Naive thymus-derived CD8-positive, alpha-beta T cell (primary cell): ENCODE measurements at regions of chr3 and their contacts with region 1.

Region 1: GRCh38 chr3:169966428-169966950 is at the start of gene SEC62:
- DNase-seq: peak; percentile 92 to 97 (median 96)
- ATAC-seq: peak; percentile 87 to 88
- H3K4me3 Mint-ChIP-seq: peak within 1 kb of the TSS; percentile 90 to 99 (median 96)
- H3K27ac Mint-ChIP-seq: peak within 1 kb of the TSS; percentile 98 to 100 (median 99)
- H3K4me1 Mint-ChIP-seq: peaks cover 32 to 73% (median 60%) of the 10 kb centered on the region in 4 donors
- H3K27me3 Mint-ChIP-seq: peaks cover 0 to 4% (median 0%) of the 10 kb centered on the region in 5 donors
- polyA plus RNA-seq, gene SEC62: 170 to 226 (median 225) TPM

Region 2: DNA sequence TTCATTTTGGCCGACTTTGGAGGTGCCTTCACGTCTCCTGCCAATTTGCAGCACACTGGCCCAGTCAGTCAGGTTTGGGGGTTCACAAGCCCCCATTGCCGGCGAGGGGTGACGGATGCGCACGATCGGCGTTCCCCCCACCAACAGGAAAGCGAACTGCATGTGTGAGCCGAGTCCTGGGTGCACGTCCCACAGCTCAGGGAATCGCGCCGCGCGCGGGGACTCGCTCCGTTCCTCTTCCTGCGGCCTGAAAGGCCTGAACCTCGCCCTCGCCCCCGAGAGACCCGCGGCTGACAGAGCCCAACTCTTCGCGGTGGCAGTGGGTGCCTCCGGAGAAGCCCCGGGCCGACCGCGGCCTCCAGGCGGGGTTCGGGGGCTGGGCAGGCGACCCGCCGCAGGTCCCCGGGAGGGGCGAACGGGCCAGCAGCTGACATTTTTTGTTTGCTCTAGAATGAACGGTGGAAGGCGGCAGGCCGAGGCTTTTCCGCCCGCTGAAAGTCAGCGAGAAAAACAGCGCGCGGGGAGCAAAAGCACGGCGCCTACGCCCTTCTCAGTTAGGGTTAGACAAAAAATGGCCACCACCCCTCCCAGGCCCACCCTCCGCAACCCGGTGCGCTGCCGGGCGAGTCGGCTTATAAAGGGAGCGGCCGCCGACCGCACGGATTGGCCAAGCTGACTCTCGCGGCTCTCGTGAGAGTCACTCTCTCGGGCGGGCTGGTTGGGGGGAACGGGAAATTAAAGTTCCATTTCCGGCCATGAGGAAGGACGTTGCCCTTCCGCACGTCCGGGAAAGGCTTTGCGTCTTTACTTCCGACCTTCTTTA is 201.8 kb before region 1 on chr3 and contains the start of gene TERC:
- POLR2A ChIA-PET with region 1: interaction called, 51 read pairs
- DNase-seq: peak; percentile 83 to 98 (median 94)
- ATAC-seq: peak; percentile 87 to 90
- H3K4me3 Mint-ChIP-seq: peak within 1 kb of the TSS; percentile 87 to 98 (median 96)
- H3K27ac Mint-ChIP-seq: peak within 1 kb of the TSS; percentile 95 to 100 (median 98)
- H3K4me1 Mint-ChIP-seq: peaks cover 7 to 28% (median 27%) of the 10 kb centered on the region in 4 donors
- H3K27me3 Mint-ChIP-seq: no peaks in the 10 kb centered on the region
- polyA plus RNA-seq, gene TERC: 1.4 to 1.6 TPM in 2 of 3 donors, not detected in the other

Region 3: GRCh38 chr3:169772897-169773828 is 193.3 kb before region 1 on chr3 and contains the start of gene MYNN:
- POLR2A ChIA-PET with region 1: interaction called, 36 read pairs
- DNase-seq: peak; percentile 83 to 95 (median 92)
- ATAC-seq: peak; percentile 78 to 81
- H3K4me3 Mint-ChIP-seq: peak within 1 kb of the TSS; percentile 91 to 99 (median 99)
- H3K27ac Mint-ChIP-seq: peak within 1 kb of the TSS; percentile 97 to 100 (median 99)
- H3K4me1 Mint-ChIP-seq: peaks cover 22 to 56% (median 51%) of the 10 kb centered on the region in 4 donors
- H3K27me3 Mint-ChIP-seq: peaks cover 0 to 3% (median 0%) of the 10 kb centered on the region in 5 donors
- polyA plus RNA-seq, gene MYNN: 11.7 to 15.7 (median 13.6) TPM

Region 4: GRCh38 chr3:169812332-169813235 is 153.9 kb before region 1 on chr3 and contains the starts of genes LRRC34 and LRRIQ4:
- POLR2A ChIA-PET with region 1: interaction called, 12 read pairs
- DNase-seq: peak; percentile 30 to 81 (median 50)
- ATAC-seq: peak; percentile 62 to 71
- H3K4me3 Mint-ChIP-seq: peak within 1 kb of the TSS; percentile 78 to 93 (median 88)
- H3K27ac Mint-ChIP-seq: peak within 1 kb of the TSS; percentile 42 to 93 (median 79)
- H3K4me1 Mint-ChIP-seq: peaks cover 18 to 24% (median 22%) of the 10 kb centered on the region in 4 donors
- H3K27me3 Mint-ChIP-seq: peaks cover 0 to under 1% (median 0%) of the 10 kb centered on the region in 5 donors
- polyA plus RNA-seq, gene LRRC34: 0.29 to 0.42 (median 0.35) TPM
- polyA plus RNA-seq, gene LRRIQ4: not detected

Region 5: DNA sequence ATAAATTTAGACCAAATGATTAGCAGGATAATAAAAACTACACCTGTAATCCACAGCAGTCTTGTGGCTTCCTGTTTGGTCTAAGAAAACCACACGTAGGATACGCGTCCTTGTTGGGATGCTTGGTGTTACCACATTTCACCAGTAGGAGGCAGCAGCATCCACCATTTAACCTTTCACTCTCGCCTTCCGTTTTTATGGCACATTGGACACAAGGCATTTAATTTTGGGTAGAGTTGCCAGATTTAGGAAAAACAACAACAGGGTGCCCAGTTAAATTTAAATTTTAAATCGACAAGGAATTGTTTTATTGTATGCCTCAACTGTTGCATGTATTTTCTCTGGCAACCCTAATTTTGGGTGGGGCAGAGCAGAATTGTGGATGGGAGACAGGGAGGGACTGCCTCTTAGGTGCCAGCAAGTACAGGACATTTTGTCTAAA is 103.0 kb before region 1 on chr3:
- POLR2A ChIA-PET with region 1: interaction called, 28 read pairs
- DNase-seq: peak; percentile 30 to 75 (median 66)
- ATAC-seq: peak; percentile 60 to 68
- H3K4me3 Mint-ChIP-seq: peak overlapping the region in 1 of 10 donors; percentile 72
- H3K27ac Mint-ChIP-seq: peak overlapping the region in 5 of 10 donors; percentile 2 to 74 (median 60)
- H3K4me1 Mint-ChIP-seq: peaks cover 16 to 28% (median 26%) of the 10 kb centered on the region in 4 donors
- H3K27me3 Mint-ChIP-seq: peaks cover 0 to 5% (median 0%) of the 10 kb centered on the region in 5 donors

Region 6: GRCh38 chr3:169954142-169954756 is 12.2 kb before region 1 on chr3:
- POLR2A ChIA-PET with region 1: interaction called, 10 read pairs
- DNase-seq: no peak
- ATAC-seq: no peak
- H3K4me3 Mint-ChIP-seq: peak overlapping the region in 1 of 10 donors; percentile 67
- H3K27ac Mint-ChIP-seq: peak overlapping the region in 2 of 10 donors; percentile 65 to 74
- H3K4me1 Mint-ChIP-seq: peaks cover 0 to 36% (median under 1%) of the 10 kb centered on the region in 4 donors
- H3K27me3 Mint-ChIP-seq: peaks cover 2 to 10% (median 6%) of the 10 kb centered on the region in 5 donors

Region 7: DNA sequence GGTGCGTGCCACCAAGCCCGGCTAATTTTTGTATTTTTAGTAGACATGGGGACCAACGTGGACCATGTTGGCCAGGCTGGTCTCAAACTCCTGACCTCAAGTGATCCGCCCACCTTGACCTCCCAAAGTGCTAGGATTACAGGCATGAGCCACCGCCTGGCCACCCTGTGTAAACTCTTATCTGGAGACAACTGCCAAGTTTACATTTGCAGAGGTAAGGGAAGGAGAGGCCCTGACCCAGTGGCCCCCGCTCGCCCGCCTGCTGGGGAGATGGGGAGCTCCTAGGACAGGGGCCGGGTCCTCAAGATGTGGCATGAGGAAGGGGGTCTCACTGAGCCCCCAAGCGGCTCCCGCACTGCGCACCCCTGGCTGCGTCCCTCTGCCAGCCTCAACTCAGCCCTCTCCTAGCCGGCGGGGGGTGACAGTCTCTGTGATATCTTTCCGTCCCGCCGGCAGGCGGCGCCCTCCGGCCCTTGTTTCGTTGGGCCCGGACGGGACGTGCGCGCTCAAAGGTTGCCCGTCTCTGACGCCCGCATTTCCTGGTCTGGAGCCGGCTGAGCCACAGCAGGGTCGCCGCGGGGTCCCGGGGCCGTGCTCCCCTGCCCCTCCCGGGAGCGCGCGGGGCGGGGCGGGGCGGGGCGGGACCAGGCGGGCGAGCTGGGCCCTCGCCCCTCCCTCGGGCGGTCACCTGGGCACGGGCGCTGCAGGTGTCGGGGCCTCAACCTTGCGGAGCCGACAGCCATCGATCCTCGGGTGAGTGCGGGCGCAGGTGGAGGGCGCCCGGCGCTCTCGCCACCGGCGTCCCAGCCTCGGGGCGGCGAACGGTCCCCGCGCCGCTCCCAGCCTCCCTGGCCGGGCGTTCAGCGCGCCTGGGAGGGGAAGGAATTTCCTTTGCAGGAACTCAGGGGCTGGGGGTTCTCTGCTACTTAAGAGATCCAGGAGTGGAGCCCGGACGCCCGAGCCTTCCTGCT is 71.3 kb after region 1 on chr3 and contains the start of gene GPR160:
- POLR2A ChIA-PET with region 1: interaction called, 27 read pairs
- DNase-seq: peak; percentile 65 to 88 (median 78)
- ATAC-seq: peak; percentile 68 to 74
- H3K4me3 Mint-ChIP-seq: peak within 1 kb of the TSS; percentile 81 to 93 (median 90)
- H3K27ac Mint-ChIP-seq: peak within 1 kb of the TSS in 8 of 10 donors; percentile 2 to 92 (median 84)
- H3K4me1 Mint-ChIP-seq: peaks cover 25 to 54% (median 36%) of the 10 kb centered on the region in 4 donors
- H3K27me3 Mint-ChIP-seq: no peaks in the 10 kb centered on the region
- polyA plus RNA-seq, gene GPR160: 12.5 to 18.3 (median 16.9) TPM

Region 8: DNA sequence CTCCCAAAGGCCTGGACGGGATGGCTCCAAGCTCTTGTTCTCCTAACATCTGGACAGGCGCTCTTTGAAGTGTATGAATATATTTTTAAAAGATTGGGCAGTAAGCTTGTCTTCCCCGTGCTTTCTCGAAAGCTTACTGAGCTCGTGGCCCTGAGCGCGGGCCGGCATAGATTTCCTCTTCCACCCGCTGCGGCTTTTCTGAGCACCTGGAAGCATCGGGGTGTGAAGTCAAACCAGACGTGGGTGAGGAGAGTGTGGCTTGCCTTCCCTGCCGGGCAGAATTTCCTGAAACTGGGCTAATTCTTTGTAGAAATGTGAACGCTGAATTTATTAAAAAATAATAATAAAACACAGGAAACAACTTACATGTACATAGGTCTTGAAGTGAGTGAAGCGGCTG is 97.2 kb after region 1 on chr3:
- POLR2A ChIA-PET with region 1: no interaction called
- DNase-seq: no peak
- ATAC-seq: no peak
- H3K4me3 Mint-ChIP-seq: no peak overlapping the region
- H3K27ac Mint-ChIP-seq: no peak overlapping the region
- H3K4me1 Mint-ChIP-seq: no peaks in the 10 kb centered on the region
- H3K27me3 Mint-ChIP-seq: no peaks in the 10 kb centered on the region